ENCODE measurements at regions of chr10 and their contacts with region 1.

Region 1: DNA sequence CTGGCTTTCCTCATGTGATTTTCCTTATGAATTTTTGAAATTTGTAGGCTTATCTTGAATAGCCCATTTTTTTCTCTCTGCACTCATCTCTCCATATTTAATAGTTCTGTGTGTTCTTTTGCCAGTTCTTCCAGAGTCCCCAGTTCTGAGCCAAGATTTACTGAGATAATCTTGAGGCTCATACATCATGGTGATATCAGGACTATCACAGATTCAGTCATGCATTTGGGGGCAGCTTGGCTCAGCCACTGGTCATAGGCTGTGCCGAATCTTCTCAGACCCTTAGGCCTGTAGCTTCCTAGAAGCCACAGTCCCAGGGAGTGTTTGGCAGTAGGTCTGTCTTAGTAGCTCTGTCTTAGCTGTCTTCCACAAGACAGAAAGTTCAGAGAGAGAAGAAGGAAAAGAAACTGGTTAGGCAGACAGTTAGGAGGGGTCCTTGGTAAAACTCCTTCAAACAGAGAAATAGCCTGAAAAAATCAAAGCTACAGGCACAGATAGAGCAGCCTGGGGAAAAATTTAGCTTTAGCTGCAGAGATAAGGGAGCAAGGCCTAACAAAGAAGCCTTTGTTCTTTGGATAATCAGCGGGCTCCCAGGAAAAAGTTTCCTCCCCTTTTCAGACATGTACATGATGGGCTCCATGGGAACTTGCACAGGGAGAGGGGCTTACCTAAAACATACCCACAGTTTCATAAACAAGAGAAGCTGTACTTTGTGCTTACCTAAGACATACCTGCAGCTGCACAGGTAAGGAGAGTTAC is 29.1 kb downstream of the FAS start:
- DNase-seq: no peak
- ATAC-seq: no peak
- H3K4me3 ChIP-seq: no peak overlapping the region
- H3K4me3 Mint-ChIP-seq: no peak overlapping the region
- H3K27ac ChIP-seq: no peak overlapping the region
- H3K27ac Mint-ChIP-seq: no peak overlapping the region
- H3K4me1 ChIP-seq: no peaks in the 10 kb centered on the region
- H3K4me1 Mint-ChIP-seq: peaks cover 8% of the 10 kb centered on the region
- H3K27me3 ChIP-seq: no peaks in the 10 kb centered on the region
- H3K27me3 Mint-ChIP-seq: no peaks in the 10 kb centered on the region
- CTCF ChIP-seq: no peak

Region 2: GRCh38 chr10:88979153-88979562 is 40.6 kb before region 1 on chr10:
- CTCF ChIA-PET with region 1: no interaction called
- POLR2A ChIA-PET with region 1: no interaction called
- intact Hi-C with region 1: no loop called
- DNase-seq: no peak
- ATAC-seq: no peak
- H3K4me3 ChIP-seq: no peak overlapping the region
- H3K4me3 Mint-ChIP-seq: no peak overlapping the region
- H3K27ac ChIP-seq: no peak overlapping the region
- H3K27ac Mint-ChIP-seq: no peak overlapping the region
- H3K4me1 ChIP-seq: peaks cover 12% of the 10 kb centered on the region
- H3K4me1 Mint-ChIP-seq: peaks cover 33% of the 10 kb centered on the region
- H3K27me3 ChIP-seq: no peaks in the 10 kb centered on the region
- H3K27me3 Mint-ChIP-seq: no peaks in the 10 kb centered on the region
- CTCF ChIP-seq: no peak

Region 3: GRCh38 chr10:89062861-89063260 is 43.1 kb after region 1 on chr10:
- CTCF ChIA-PET with region 1: no interaction called
- POLR2A ChIA-PET with region 1: no interaction called
- intact Hi-C with region 1: loop called in 1 of 2 experiments (anchors 5 kb)
- DNase-seq: no peak
- ATAC-seq: no peak
- H3K4me3 ChIP-seq: no peak overlapping the region
- H3K4me3 Mint-ChIP-seq: no peak overlapping the region
- H3K27ac ChIP-seq: no peak overlapping the region
- H3K27ac Mint-ChIP-seq: no peak overlapping the region
- H3K4me1 ChIP-seq: no peaks in the 10 kb centered on the region
- H3K4me1 Mint-ChIP-seq: no peaks in the 10 kb centered on the region
- H3K27me3 ChIP-seq: no peaks in the 10 kb centered on the region
- H3K27me3 Mint-ChIP-seq: no peaks in the 10 kb centered on the region
- CTCF ChIP-seq: no peak

Measured in CD4-positive, alpha-beta T cell (primary cell).